Posterior cingulate gyrus (tissue), 11 donors: ENCODE measurements at regions of chr7 and their contacts with region 1.

Region 1: GRCh38 chr7:80428161-80429054 is 83.5 kb downstream of the GNAT3 start:
- DNase-seq: no peak

Region 2: DNA sequence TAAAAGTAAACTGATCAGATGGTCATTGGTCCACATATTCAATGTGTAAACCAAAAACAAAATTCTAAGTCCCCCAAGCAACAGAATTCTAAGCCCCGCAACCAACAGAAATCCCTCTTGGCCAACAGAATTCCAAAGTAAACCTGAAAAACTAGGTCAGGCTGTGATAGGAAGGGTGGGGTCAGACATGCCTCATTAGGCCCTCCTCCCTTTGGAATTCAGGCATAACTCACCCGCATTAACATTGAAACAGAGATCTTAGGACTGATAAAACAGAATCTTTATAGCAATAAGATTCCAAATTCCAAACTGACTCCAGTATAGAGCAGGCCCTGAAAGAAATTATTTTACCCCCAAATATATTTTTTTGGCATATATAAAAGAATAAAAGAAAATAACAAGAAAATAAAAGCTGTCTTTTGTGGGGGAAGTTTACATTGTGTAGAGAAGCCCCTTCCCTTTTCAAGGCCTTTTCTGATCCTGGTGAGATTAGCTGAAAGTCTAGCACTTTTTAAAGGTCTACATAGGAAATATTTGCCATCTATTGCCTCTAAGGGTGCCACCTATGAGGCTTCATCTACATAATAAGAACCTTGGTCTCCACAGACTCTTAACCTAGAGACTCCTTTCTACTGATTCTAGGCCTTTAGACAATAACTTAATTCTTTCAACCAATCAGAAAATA is 52.9 kb after region 1 on chr7:
- intact Hi-C with region 1: loop called (anchors 10 kb)
- DNase-seq: no peak